ENCODE measurements at regions of chr4 and their contacts with region 1.

Region 1: GRCh38 chr4:159235779-159236368 is 133.0 kb downstream of the RAPGEF2 start:
- DNase-seq: no peak
- H3K4me3 ChIP-seq: no peak overlapping the region
- H3K27ac ChIP-seq: no peak overlapping the region
- H3K4me1 ChIP-seq: no peaks in the 10 kb centered on the region
- H3K27me3 ChIP-seq: no peaks in the 10 kb centered on the region
- CTCF ChIP-seq: no peak

Region 2: DNA sequence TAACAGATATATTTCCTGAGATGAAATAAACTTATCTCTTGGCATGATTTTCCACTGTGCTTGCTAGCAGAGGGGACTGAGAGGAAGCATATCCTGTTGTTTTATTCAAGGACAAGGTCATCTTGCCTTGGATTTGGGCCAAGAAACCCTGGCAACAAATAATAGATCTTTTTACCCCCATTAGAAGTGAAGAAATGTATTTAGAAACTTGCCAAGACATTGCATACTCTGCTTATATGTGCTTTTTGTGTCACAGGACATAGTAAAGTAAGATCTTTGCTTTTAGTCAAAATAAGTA is 37.2 kb after region 1 on chr4:
- CTCF ChIA-PET with region 1: no interaction called
- POLR2A ChIA-PET with region 1: no interaction called
- intact Hi-C with region 1: loop called (anchors 5 kb)
- DNase-seq: no peak
- H3K4me3 ChIP-seq: no peak overlapping the region
- H3K27ac ChIP-seq: no peak overlapping the region
- H3K4me1 ChIP-seq: peaks cover 29% of the 10 kb centered on the region
- H3K27me3 ChIP-seq: no peaks in the 10 kb centered on the region
- CTCF ChIP-seq: no peak

Measured in PC-9 (cell line).